BJ (cell line): ENCODE measurements at regions of chr1 and their contacts with region 1.

Region 1: DNA sequence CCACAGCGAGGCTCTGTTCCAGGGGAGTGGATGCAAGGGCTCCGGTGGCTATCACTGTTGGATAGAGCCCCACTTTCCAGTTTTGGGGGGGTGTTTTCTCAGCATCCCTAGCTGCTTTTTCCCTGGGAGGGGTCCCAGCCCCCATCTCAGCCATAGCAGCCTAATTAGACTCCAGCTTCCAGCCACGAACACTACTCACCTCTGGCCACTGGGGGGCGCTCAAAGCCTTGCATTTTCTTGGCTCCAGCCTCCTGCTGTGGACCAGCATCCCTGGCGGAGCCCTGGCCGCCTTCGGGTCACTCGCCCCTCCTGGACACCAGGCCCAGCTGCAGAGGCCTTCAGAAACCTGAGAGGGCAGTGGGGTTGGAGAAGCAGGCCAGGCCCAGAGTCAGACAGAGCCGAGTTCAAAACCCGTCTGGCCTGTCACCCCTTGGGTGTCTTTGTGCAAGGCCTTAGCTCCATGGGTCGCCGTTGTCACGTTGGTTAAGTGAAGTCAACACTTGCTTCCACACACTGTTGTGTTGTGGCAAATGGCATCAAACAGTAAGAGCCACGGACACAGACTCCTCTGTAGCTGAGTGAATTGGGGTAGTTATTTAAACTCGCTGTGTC is 93.5 kb upstream of the ACTL8 start:
- DNase-seq: no peak
- H3K4me3 ChIP-seq: no peak overlapping the region
- H3K27me3 ChIP-seq: no peaks in the 10 kb centered on the region
- CTCF ChIP-seq: peak; percentile 85

Region 2: DNA sequence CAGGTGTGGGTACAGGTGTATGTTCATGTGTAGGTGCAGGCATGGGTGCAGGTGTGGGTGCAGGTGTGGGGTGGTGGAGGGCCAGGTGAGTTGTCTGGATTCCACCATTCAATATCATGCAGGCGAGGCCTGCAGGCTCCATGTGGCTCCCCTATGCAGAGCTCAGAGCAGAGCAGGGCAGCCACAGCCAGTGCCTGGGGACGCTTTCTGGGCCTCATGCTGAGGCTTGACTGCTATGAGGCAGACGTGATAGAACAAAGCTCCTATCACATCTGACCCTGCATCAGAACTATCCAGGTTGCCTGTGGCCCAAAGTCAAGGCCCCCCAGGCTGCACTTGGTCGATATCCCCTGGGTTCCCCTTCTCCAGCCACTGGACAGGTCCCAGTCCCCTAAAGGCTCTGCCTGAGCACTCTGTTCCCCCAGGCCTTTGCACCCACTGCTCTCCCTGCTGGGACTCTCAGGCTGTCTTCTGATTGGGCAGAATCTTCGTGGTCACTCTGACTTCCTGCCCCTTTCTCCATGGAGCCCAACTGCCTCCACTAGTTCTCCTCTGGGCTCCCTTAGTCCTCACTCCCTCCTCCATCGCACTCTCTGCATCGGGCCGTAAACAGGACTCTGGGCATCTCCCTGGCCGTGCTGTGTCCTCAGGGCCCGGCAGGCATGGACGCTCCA is 14.9 kb after region 1 on chr1:
- CTCF ChIA-PET with region 1: interaction called, 12 read pairs
- POLR2A ChIA-PET with region 1: no interaction called
- DNase-seq: no peak
- H3K4me3 ChIP-seq: no peak overlapping the region
- H3K27me3 ChIP-seq: no peaks in the 10 kb centered on the region
- CTCF ChIP-seq: no peak

Region 3: GRCh38 chr1:17696417-17697301 is 35.0 kb after region 1 on chr1:
- CTCF ChIA-PET with region 1: interaction called, 25 read pairs
- POLR2A ChIA-PET with region 1: no interaction called
- DNase-seq: peak; percentile 15
- H3K4me3 ChIP-seq: no peak overlapping the region
- H3K27me3 ChIP-seq: no peaks in the 10 kb centered on the region
- CTCF ChIP-seq: peak; percentile 71

Region 4: GRCh38 chr1:17909634-17910033 is 248.0 kb after region 1 on chr1:
- CTCF ChIA-PET with region 1: interaction called, 15 read pairs
- POLR2A ChIA-PET with region 1: no interaction called
- DNase-seq: no peak
- H3K4me3 ChIP-seq: no peak overlapping the region
- H3K27me3 ChIP-seq: peaks cover 4% of the 10 kb centered on the region; the same call in 1 of the 2 replicates
- CTCF ChIP-seq: peak; percentile 44

Region 5: GRCh38 chr1:17998889-17999288 is 337.2 kb after region 1 on chr1:
- CTCF ChIA-PET with region 1: no interaction called
- POLR2A ChIA-PET with region 1: no interaction called
- DNase-seq: no peak
- H3K4me3 ChIP-seq: no peak overlapping the region
- H3K27me3 ChIP-seq: no peaks in the 10 kb centered on the region
- CTCF ChIP-seq: peak; percentile 30

Region 6: GRCh38 chr1:18100491-18101063 is 438.9 kb after region 1 on chr1:
- CTCF ChIA-PET with region 1: interaction called, 40 read pairs
- POLR2A ChIA-PET with region 1: no interaction called
- DNase-seq: peak; percentile 4
- H3K4me3 ChIP-seq: no peak overlapping the region
- H3K27me3 ChIP-seq: no peaks in the 10 kb centered on the region
- CTCF ChIP-seq: peak; percentile 75